ENCODE measurements at regions of chr3 and their contacts with region 1.

Region 1: GRCh38 chr3:46705022-46705530 is 3.9 kb downstream of the TMIE start:
- DNase-seq: peak; percentile 45 to 71 (median 63)
- ATAC-seq: peak; percentile 87
- H3K4me3 ChIP-seq: no peak overlapping the region
- H3K4me3 Mint-ChIP-seq: no peak overlapping the region
- H3K27ac ChIP-seq: no peak overlapping the region
- H3K27ac Mint-ChIP-seq: peak overlapping the region in 1 of 9 donors; percentile 36
- H3K4me1 ChIP-seq: peaks cover 0 to 19% of the 10 kb centered on the region in 2 donors
- H3K4me1 Mint-ChIP-seq: peaks cover 0 to 29% (median 20%) of the 10 kb centered on the region in 7 donors
- H3K27me3 ChIP-seq: no peaks in the 10 kb centered on the region
- H3K27me3 Mint-ChIP-seq: peaks cover 0 to 25% (median 0%) of the 10 kb centered on the region in 5 donors

Region 2: GRCh38 chr3:46895204-46895660 is 190.2 kb after region 1 on chr3:
- CTCF ChIA-PET with region 1: interaction called, 16 read pairs
- POLR2A ChIA-PET with region 1: no interaction called
- intact Hi-C with region 1: loop called in 1 of 2 experiments (anchors 1 kb)
- DNase-seq: peak; percentile 60 to 83 (median 74)
- ATAC-seq: peak; percentile 84
- H3K4me3 ChIP-seq: no peak overlapping the region
- H3K4me3 Mint-ChIP-seq: peak overlapping the region in 1 of 10 donors; percentile 22
- H3K27ac ChIP-seq: no peak overlapping the region
- H3K27ac Mint-ChIP-seq: peak overlapping the region in 1 of 9 donors; percentile 69
- H3K4me1 ChIP-seq: no peaks in the 10 kb centered on the region
- H3K4me1 Mint-ChIP-seq: peaks cover 0 to 10% (median 6%) of the 10 kb centered on the region in 7 donors
- H3K27me3 ChIP-seq: peaks cover 0 to 5% of the 10 kb centered on the region in 2 donors
- H3K27me3 Mint-ChIP-seq: peaks cover 39 to 72% (median 57%) of the 10 kb centered on the region in 5 donors

Region 3: GRCh38 chr3:47370887-47371697 is 666.0 kb after region 1 on chr3:
- CTCF ChIA-PET with region 1: no interaction called
- POLR2A ChIA-PET with region 1: no interaction called
- intact Hi-C with region 1: loop called (anchors 1 to 2 kb)
- DNase-seq: peak in 3 of 9 donors; percentile 7 to 20 (median 11)
- ATAC-seq: peak; percentile 40
- H3K4me3 ChIP-seq: no peak overlapping the region
- H3K4me3 Mint-ChIP-seq: no peak overlapping the region
- H3K27ac ChIP-seq: no peak overlapping the region
- H3K27ac Mint-ChIP-seq: peak overlapping the region in 1 of 9 donors; percentile 25
- H3K4me1 ChIP-seq: no peaks in the 10 kb centered on the region
- H3K4me1 Mint-ChIP-seq: peaks cover 0 to 12% (median 0%) of the 10 kb centered on the region in 7 donors
- H3K27me3 ChIP-seq: no peaks in the 10 kb centered on the region
- H3K27me3 Mint-ChIP-seq: peaks cover 0 to 9% (median 4%) of the 10 kb centered on the region in 5 donors

Measured in naive thymus-derived CD4-positive, alpha-beta T cell (primary cell).